Cardiac septum (tissue), 1 donor: ENCODE measurements at regions of chr20 and their contacts with region 1.

Region 1: DNA sequence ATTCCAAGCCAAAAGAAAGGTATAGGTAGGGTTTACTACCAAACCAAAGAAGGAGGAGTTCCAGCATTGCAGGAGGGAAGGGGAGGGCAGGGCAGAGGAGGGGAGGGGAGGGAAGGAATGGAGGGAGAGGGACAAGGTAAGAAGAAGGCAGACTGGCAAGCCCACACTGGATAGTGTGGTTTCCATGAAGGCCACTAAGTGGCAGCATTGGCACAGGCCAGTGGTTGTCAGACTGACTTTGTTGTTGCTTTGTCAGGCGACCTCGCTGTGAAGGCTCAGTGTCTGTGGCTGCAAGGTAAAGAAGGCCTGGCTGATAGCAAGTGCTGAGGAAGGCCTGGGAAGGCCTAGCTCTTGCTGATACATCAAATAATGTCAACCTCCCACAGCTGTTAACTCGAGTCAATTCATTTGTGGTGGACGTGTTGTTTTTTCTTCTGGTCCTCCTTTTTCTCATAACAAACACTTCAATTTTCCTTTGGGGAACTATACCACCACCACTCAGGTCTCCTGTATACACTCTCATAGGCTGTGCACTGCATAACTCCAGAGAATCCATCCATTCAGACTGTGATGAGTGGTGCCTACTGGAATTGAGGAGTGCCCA is 7.7 kb upstream of the ZNF334 start:
- DNase-seq: no peak

Region 2: GRCh38 chr20:46681032-46681854 is 160.2 kb after region 1 on chr20:
- intact Hi-C with region 1: loop called (anchors 2 kb)
- DNase-seq: no peak

Region 3: GRCh38 chr20:47008842-47009508 is 487.9 kb after region 1 on chr20:
- intact Hi-C with region 1: no loop called
- DNase-seq: peak; percentile 5